Mammary epithelial cell (primary cell): ENCODE measurements at regions of chr5 and their contacts with region 1.

Region 1: GRCh38 chr5:139287890-139288635 is 5.5 kb upstream of the MATR3 start:
- DNase-seq: no peak
- H3K4me3 ChIP-seq: no peak overlapping the region
- H3K27ac ChIP-seq: no peak overlapping the region
- H3K4me1 ChIP-seq: no peaks in the 10 kb centered on the region
- H3K27me3 ChIP-seq: no peaks in the 10 kb centered on the region
- CTCF ChIP-seq: peak in 1 of 2 donors; percentile 30

Region 2: GRCh38 chr5:139335811-139336210 is 47.7 kb after region 1 on chr5:
- CTCF ChIA-PET with region 1: no interaction called
- dilution Hi-C with region 1: loop called (anchors 5 kb)
- in situ Hi-C with region 1: no loop called
- intact Hi-C with region 1: no loop called
- DNase-seq: no peak
- H3K4me3 ChIP-seq: no peak overlapping the region
- H3K27ac ChIP-seq: no peak overlapping the region
- H3K4me1 ChIP-seq: no peaks in the 10 kb centered on the region
- H3K27me3 ChIP-seq: no peaks in the 10 kb centered on the region
- CTCF ChIP-seq: no peak

Region 3: DNA sequence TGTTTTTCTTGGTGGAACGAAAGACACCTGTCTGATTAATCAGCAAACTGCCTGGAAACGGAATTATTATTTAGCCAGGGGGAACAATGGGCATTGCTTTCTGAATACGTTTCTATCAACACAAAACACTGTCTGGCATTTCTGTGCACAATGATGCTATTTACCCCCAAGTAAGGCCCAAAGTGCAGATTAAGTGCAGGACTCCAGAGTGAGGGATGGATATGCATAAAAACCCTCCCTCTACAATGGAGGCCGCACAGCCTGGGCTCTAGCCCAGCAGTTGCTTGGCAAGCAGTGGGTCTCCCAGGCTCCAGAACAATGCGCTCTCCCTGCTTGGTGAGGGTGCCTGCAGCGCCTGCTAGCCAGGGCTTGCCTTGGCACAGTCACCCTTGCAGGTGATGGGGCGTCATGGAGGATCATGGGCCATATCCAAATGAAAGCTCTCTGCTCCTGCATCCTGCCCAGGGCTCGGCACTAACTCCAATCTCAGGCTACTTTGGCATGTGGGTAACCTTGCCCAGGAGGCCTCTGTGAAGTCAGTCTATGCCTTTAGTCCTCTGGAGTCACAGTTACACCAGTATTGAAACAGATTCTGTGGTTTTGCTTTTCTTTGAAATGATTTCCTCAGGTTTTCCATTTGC is 127.3 kb after region 1 on chr5:
- CTCF ChIA-PET with region 1: no interaction called
- dilution Hi-C with region 1: no loop called
- in situ Hi-C with region 1: no loop called
- intact Hi-C with region 1: loop called (anchors 2 kb)
- DNase-seq: peak; percentile 75
- H3K4me3 ChIP-seq: no peak overlapping the region
- H3K27ac ChIP-seq: peak overlapping the region; percentile 52
- H3K4me1 ChIP-seq: peaks cover 18% of the 10 kb centered on the region
- H3K27me3 ChIP-seq: no peaks in the 10 kb centered on the region
- CTCF ChIP-seq: no peak

Region 4: DNA sequence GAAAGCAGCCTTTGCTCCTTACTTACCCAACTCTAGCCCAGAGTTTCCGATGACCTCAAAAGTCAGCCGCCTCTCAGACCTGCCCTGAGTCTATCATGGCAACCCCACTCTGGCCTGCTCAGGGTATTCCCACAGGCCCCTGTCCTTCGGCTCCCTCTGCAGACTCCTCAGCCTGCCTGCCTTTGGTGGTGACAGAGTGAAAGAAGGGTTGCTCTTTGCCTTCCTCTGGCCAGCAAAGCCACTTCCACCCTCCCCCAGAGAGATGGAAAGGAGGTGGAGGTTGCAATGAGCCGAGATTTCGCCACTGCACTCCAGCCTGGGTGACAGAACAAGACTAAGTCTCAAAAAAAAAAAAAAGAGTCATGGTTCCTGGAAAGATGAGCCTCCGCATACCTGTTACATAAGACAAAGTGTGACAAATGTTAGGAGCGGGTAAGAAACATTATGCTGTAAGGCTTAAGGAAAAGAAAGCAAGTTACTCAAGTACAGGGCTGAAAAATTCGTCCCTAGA is 180.4 kb after region 1 on chr5:
- CTCF ChIA-PET with region 1: no interaction called
- dilution Hi-C with region 1: no loop called
- in situ Hi-C with region 1: no loop called
- intact Hi-C with region 1: no loop called
- DNase-seq: no peak
- H3K4me3 ChIP-seq: no peak overlapping the region
- H3K27ac ChIP-seq: no peak overlapping the region
- H3K4me1 ChIP-seq: peaks cover 5% of the 10 kb centered on the region
- H3K27me3 ChIP-seq: no peaks in the 10 kb centered on the region
- CTCF ChIP-seq: no peak